Mammary epithelial cell (primary cell): ENCODE measurements at regions of chr12 and their contacts with region 1.

Region 1: DNA sequence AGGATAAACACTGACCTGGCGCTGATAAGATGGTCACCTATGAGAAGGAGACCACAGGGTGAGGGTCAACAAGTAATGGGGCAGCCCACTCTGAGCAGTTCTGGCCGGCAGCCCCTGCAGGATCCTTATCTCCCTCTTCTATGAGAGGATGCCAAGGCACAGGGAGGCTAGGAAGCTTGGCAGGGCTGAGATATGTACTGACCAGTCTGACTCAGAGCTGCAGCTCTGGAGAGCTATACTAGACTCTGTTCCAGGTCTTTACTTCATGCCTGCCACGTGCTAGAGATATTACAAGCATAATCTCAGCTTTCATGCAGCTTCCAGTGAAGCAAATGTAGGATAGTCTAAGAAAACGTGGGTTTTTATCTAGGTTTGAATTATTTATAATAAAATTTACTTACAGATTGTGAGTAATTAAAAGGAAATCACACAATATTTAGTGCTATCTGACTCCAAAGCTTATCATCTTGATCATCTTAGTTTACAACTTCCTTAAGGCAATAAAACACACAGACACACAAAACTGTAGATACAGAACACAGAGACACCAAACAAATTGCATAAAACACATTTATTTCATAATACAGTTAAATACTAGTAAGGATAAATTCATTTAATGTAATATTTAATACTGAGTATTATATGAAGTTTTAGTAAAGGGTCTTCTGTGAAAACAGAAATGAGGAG is 32.3 kb downstream of the GIT2 start:
- DNase-seq: no peak
- H3K4me3 ChIP-seq: no peak overlapping the region
- H3K27ac ChIP-seq: no peak overlapping the region
- H3K4me1 ChIP-seq: no peaks in the 10 kb centered on the region
- H3K27me3 ChIP-seq: no peaks in the 10 kb centered on the region
- CTCF ChIP-seq: no peak

Region 2: DNA sequence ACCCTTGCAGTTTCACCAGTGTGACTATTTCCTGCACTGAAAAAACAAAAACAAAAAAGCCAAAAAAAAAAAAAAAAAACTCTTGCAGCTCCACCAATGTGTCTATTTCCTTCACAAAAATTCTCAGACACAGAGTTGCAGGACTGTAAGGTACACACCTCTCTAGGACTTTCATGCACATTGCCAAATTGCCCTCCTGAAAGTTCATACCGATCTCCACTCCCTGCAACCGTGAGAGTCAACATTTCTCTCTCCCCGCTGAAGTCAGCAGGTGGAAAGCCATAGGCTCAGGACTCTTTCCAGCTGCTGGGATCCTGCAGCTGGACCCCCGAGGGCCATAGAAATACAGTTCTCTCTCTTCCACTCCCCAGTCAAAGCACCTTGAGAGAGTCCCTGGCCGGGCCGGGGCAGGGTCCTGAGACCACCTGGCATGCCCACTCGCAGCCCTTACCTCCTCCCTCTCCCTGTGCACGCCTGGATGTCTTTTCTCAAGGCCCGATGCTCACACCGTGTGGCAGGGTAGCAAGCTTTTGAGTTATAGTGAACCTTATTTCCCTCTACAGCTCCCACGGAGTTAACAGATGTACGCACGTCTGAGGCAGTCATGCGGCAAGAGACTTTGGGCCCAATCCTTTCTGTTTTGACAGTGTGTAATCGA is 414.1 kb before region 1 on chr12:
- CTCF ChIA-PET with region 1: no interaction called
- dilution Hi-C with region 1: no loop called
- in situ Hi-C with region 1: no loop called
- intact Hi-C with region 1: no loop called
- DNase-seq: no peak
- H3K4me3 ChIP-seq: no peak overlapping the region
- H3K27ac ChIP-seq: no peak overlapping the region
- H3K4me1 ChIP-seq: peaks cover 16% of the 10 kb centered on the region
- H3K27me3 ChIP-seq: no peaks in the 10 kb centered on the region
- CTCF ChIP-seq: no peak

Region 3: GRCh38 chr12:109818905-109819500 is 144.9 kb before region 1 on chr12:
- CTCF ChIA-PET with region 1: no interaction called
- dilution Hi-C with region 1: loop called (anchors 5 kb)
- in situ Hi-C with region 1: no loop called
- intact Hi-C with region 1: no loop called
- DNase-seq: peak; percentile 95
- H3K4me3 ChIP-seq: no peak overlapping the region
- H3K27ac ChIP-seq: peak overlapping the region; percentile 36
- H3K4me1 ChIP-seq: peaks cover 52% of the 10 kb centered on the region
- H3K27me3 ChIP-seq: no peaks in the 10 kb centered on the region
- CTCF ChIP-seq: no peak

Region 4: GRCh38 chr12:109983432-109984142 is 19.7 kb after region 1 on chr12:
- CTCF ChIA-PET with region 1: no interaction called
- dilution Hi-C with region 1: no loop called
- in situ Hi-C with region 1: no loop called
- intact Hi-C with region 1: no loop called
- DNase-seq: no peak
- H3K4me3 ChIP-seq: no peak overlapping the region
- H3K27ac ChIP-seq: no peak overlapping the region
- H3K4me1 ChIP-seq: no peaks in the 10 kb centered on the region
- H3K27me3 ChIP-seq: no peaks in the 10 kb centered on the region
- CTCF ChIP-seq: no peak

Region 5: DNA sequence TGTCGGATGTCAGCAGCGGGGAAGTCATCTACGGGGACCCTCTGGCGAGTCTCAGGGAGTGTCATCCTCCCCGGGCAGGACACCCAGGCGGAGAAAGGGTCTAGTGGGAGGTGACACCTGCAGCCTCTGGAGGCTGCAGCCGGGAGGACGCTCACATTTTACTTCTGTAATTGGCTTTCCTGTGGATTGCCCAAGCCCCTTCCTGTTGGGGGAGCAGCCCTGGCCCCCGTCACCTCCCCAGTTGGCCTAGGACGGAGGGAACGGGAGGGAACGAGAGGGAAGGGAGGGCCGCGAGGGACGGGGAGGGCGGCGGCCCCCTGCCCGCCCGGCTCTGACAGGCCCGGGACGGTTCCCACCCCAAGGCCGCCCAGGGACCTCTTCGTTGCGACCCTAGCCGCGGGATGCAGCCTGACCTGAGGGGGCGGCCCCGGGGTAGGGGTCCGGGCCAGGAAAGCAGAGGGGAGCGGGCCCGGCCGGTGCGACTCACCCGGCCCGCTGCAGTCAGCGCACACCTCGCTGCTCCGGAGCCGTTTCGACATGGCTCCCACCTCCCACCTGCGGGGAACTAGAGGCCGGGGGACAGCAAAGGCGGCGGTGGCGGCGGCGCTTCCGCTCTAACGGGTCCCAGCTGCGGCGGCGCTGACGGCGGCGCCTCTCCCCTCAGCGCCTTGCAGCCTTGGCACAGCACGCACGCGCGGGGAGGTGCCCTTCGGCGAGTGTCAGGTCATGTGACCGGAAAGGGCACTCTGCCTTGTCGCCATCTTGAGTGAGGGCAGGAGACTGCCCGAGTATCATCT is 32.0 kb after region 1 on chr12 and contains the start of gene GIT2:
- CTCF ChIA-PET with region 1: no interaction called
- dilution Hi-C with region 1: loop called (anchors 5 kb)
- in situ Hi-C with region 1: no loop called
- intact Hi-C with region 1: no loop called
- DNase-seq: peak; percentile 86
- H3K4me3 ChIP-seq: peak within 1 kb of the TSS; percentile 72 to 83 (median 73)
- H3K27ac ChIP-seq: peak within 1 kb of the TSS; percentile 35
- H3K4me1 ChIP-seq: peaks cover 23% of the 10 kb centered on the region
- H3K27me3 ChIP-seq: no peaks in the 10 kb centered on the region
- CTCF ChIP-seq: peak in 1 of 2 donors; percentile 2
- total RNA-seq, gene GIT2: 26.8 to 30.8 TPM

Region 6: DNA sequence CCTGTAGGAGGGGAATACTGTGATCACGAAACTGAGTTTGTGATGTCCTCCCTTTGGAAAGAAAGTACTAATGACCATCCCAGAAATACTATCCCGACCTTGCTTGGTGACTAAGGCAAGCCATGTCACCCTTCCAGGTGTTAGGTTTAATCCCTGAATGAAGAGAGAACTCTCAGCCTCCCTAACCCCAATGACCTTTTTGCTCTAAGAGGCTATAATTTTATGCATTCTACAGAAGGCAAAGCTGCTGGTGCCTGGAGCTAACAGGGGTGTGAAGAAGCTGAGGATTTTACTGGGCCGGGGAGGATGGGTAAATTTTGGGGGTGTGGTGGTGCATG is 92.2 kb after region 1 on chr12:
- CTCF ChIA-PET with region 1: no interaction called
- dilution Hi-C with region 1: loop called (anchors 5 kb)
- in situ Hi-C with region 1: no loop called
- intact Hi-C with region 1: no loop called
- DNase-seq: no peak
- H3K4me3 ChIP-seq: no peak overlapping the region
- H3K27ac ChIP-seq: peak overlapping the region; percentile 5
- H3K4me1 ChIP-seq: peaks cover 10% of the 10 kb centered on the region
- H3K27me3 ChIP-seq: no peaks in the 10 kb centered on the region
- CTCF ChIP-seq: no peak